ENCODE measurements at regions of chr22 and their contacts with region 1.

Region 1: GRCh38 chr22:30890686-30891442 is 77.7 kb downstream of the MORC2 start:
- DNase-seq: no peak
- H3K4me3 ChIP-seq: no peak overlapping the region
- H3K27me3 ChIP-seq: no peaks in the 10 kb centered on the region
- CTCF ChIP-seq: peak; percentile 87

Region 2: GRCh38 chr22:30763815-30764686 is 126.8 kb before region 1 on chr22:
- CTCF ChIA-PET with region 1: interaction called, 35 read pairs
- POLR2A ChIA-PET with region 1: no interaction called
- DNase-seq: peak; percentile 18
- H3K4me3 ChIP-seq: no peak overlapping the region
- H3K27me3 ChIP-seq: no peaks in the 10 kb centered on the region
- CTCF ChIP-seq: peak; percentile 70

Region 3: DNA sequence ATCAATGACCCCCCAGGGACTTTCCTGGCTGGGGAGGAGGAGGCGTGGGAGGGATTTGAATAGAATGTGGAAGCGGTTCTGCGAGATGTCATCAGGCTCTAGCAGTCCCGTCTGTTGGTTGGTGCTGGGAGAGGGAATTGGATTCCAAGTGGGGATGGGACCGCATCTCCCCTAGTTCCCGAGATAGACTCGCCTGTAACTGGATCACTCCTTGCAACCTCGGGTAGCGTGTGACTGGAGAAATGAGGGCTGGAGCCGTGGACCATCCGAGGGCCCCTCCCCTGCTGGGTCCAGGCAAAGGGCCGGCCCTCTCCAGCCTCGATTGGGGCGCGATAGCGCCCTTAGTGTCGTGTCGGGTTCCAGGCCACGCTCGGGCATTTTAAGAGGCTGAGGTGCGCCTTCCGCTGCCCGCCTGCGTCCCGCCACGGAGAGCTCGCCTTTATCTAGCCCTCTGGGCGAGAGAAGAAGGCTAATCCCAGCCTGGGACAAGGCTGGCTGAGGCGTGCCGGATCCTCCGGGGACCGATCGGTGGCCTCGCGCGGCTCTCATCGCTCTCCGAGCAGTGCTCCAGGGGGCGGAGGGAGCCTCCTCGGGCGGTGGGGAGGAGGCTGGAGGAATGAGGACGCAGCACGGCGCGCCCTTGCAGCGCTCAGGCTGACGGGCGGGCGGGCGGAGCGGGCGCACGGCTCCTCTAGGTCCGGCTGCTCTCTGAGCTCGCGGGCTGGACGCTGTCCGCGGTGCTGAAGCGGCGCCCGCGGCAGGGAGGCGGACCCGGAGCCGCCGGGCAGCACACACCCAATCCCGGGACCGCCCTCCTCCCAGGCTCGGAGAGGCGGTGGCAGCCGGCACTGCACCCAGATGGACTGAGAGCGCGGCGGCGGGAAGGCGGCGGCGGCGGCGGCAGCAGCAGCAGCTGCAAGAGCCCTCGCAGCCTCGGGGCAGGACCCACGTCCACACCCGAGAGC is 88.4 kb before region 1 on chr22:
- CTCF ChIA-PET with region 1: interaction called, 10 read pairs
- POLR2A ChIA-PET with region 1: no interaction called
- DNase-seq: peak; percentile 46
- H3K4me3 ChIP-seq: peak overlapping the region; percentile 27
- H3K27me3 ChIP-seq: 0 out of 2 replicates have a peak, but pooled peaks cover 2% of the 10 kb centered on the region
- CTCF ChIP-seq: 0 out of 2 replicates have a peak, but pooled peaks have one; percentile 10

Region 4: DNA sequence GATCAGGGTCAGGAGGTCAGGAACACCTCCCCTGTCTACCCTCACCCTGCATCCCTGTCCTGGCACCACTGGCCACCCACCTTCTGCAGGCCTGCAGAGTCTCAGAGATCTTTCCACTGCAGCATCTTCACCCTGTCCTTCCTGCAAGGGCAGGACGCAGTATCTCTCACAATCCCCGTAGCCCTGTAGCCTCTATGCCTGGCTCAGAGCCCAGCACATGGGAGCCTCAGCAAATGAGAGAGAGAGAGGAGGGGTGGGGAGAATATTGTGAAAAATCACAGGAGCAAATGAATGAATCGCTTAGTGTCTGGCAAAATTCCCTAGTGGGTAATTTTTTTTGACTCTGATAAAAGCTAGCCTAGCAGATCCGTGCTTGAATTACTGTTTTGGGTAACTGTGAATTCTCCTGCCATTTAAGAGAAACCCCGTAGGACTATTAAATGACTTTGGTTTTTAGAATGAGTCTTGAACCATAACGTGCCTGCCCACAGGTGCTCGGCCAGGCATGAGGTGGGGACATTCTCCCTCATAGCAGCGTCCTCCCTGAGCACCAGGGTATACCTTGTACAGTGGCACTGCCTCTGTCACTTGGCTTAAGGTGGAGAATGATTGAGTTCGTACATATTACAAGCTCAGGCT is 13.8 kb before region 1 on chr22:
- CTCF ChIA-PET with region 1: interaction called, 44 read pairs
- POLR2A ChIA-PET with region 1: no interaction called
- DNase-seq: no peak
- H3K4me3 ChIP-seq: no peak overlapping the region
- H3K27me3 ChIP-seq: no peaks in the 10 kb centered on the region
- CTCF ChIP-seq: no peak

Region 5: GRCh38 chr22:30902496-30903357 is 11.9 kb after region 1 on chr22:
- CTCF ChIA-PET with region 1: interaction called, 18 read pairs
- POLR2A ChIA-PET with region 1: no interaction called
- DNase-seq: no peak
- H3K4me3 ChIP-seq: no peak overlapping the region
- H3K27me3 ChIP-seq: no peaks in the 10 kb centered on the region
- CTCF ChIP-seq: no peak

Region 6: DNA sequence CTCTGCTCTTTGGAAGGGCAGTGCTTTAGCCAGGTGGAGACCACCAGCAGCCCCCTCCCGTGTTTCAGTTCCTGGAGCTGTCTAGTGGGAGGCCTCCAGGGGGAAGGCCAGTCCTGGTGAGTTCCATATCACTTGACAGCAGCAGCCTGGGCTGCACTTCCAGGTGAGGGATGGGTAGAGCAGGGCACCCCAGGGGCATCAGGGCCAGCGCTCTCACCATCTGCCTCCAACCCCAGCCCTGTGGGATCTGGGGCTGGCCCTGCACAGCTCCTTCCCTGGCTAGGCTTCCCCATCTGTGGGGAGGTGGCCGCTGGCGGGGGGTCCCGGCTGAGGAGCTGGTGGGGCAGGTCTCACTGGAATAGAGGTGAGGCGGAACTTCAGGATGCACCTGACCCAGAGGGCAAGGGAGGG is 17.2 kb after region 1 on chr22:
- CTCF ChIA-PET with region 1: interaction called, 18 read pairs
- POLR2A ChIA-PET with region 1: interaction called, 3 read pairs
- DNase-seq: no peak
- H3K4me3 ChIP-seq: no peak overlapping the region
- H3K27me3 ChIP-seq: no peaks in the 10 kb centered on the region
- CTCF ChIP-seq: no peak

Region 7: DNA sequence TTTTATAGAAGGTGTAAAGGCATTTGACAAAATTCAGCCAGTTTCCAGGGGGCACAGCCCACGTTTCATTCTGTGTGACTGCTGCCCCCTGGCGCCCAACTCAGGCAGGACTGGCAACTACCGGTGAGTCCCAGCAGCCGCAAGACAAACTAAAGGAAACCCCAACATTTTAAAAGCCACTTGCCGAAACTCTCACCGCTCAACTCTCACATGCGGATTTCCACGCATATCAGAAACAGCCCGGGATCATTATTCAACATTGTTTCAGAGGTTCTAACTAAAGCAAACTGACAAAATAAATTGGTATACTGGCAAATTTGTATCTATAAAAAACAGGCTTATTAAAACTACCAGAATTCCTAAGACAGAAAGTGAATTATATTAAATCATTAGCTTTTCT is 29.5 kb after region 1 on chr22:
- CTCF ChIA-PET with region 1: interaction called, 18 read pairs
- POLR2A ChIA-PET with region 1: no interaction called
- DNase-seq: no peak
- H3K4me3 ChIP-seq: no peak overlapping the region
- H3K27me3 ChIP-seq: no peaks in the 10 kb centered on the region
- CTCF ChIP-seq: peak; percentile 91

Region 8: GRCh38 chr22:31029276-31029675 is 138.4 kb after region 1 on chr22:
- CTCF ChIA-PET with region 1: no interaction called
- POLR2A ChIA-PET with region 1: no interaction called
- DNase-seq: no peak
- H3K4me3 ChIP-seq: no peak overlapping the region
- H3K27me3 ChIP-seq: 0 out of 2 replicates have a peak, but pooled peaks cover 1% of the 10 kb centered on the region
- CTCF ChIP-seq: no peak